Dendritic cell treated with granulocyte-macrophage colony-stimulating factor and Interleukin-4, amounts not matched to agents 40 ng/mL and 50 ng/mL, for 4 days (primary cell): ENCODE measurements at regions of chr3 and their contacts with region 1.

Region 1: GRCh38 chr3:44510000-44510368 is 32.5 kb upstream of the ZNF445 start:
- H3K4me3 Mint-ChIP-seq: peak overlapping the region; percentile 91
- H3K27ac Mint-ChIP-seq: peak overlapping the region; percentile 97
- H3K4me1 Mint-ChIP-seq: peaks cover 26% of the 10 kb centered on the region
- H3K27me3 Mint-ChIP-seq: peaks cover 3% of the 10 kb centered on the region

Region 2: GRCh38 chr3:44323341-44323955 is 186.5 kb before region 1 on chr3:
- intact Hi-C with region 1: loop called (anchors 5 kb)
- H3K4me3 Mint-ChIP-seq: no peak overlapping the region
- H3K27ac Mint-ChIP-seq: no peak overlapping the region
- H3K4me1 Mint-ChIP-seq: peaks cover 6% of the 10 kb centered on the region
- H3K27me3 Mint-ChIP-seq: no peaks in the 10 kb centered on the region

Region 3: DNA sequence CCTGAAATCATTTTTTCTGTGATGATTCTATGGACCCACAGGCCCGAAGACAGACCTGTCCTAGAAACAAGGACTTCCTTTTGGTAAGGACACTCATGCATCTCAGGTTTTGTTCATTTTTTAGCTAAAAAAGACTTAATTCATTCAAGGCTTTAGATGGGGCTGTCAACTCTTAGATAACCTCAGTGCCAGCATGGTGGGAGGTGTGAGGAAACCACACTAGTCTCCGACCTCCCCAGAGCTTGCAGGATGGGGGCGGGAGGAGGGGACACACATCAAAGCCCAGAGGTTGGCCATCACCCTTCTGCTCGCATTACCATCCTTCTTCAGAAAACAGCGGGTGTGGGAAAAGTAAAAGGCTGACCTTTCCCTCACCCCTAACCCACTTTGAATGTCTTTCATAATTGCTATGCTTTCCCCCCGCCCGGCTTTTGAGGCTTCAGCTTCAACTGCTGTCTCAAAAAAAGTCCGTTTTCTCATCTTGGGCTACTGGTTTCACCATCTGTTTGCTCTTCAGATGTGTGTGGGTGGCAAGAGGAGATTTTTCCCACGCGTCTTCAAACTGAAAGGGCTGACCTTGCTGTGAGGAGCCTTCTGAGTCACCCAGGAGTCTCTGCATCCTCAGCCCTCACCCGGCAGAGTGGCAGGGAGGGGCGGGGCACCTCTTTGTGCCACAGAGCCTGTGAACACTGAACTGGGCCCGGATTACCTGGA is 1405.7 kb after region 1 on chr3:
- intact Hi-C with region 1: no loop called
- H3K4me3 Mint-ChIP-seq: no peak overlapping the region
- H3K27ac Mint-ChIP-seq: no peak overlapping the region
- H3K4me1 Mint-ChIP-seq: peaks cover 8% of the 10 kb centered on the region
- H3K27me3 Mint-ChIP-seq: no peaks in the 10 kb centered on the region